ENCODE measurements at regions of chr11 and their contacts with region 1.

Region 1: GRCh38 chr11:107043242-107044006 is 25.1 kb upstream of the GUCY1A2 start:
- DNase-seq: no peak
- ATAC-seq: no peak
- H3K4me3 ChIP-seq: no peak overlapping the region
- H3K27ac ChIP-seq: no peak overlapping the region
- H3K4me1 ChIP-seq: no peaks in the 10 kb centered on the region
- H3K27me3 ChIP-seq: no peaks in the 10 kb centered on the region
- CTCF ChIP-seq: no peak
- POLR2A ChIP-seq: no peak

Region 2: GRCh38 chr11:106724293-106724892 is 319.0 kb before region 1 on chr11:
- intact Hi-C with region 1: loop called in 7 of 10 experiments (anchors 5 to 10 kb)
- DNase-seq: no peak
- ATAC-seq: peak in 1 of 4 donors; percentile 18
- H3K4me3 ChIP-seq: no peak overlapping the region
- H3K27ac ChIP-seq: no peak overlapping the region
- H3K4me1 ChIP-seq: no peaks in the 10 kb centered on the region
- H3K27me3 ChIP-seq: no peaks in the 10 kb centered on the region
- CTCF ChIP-seq: no peak
- POLR2A ChIP-seq: no peak